Psoas muscle (tissue), 8 donors: ENCODE measurements at regions of chr5 and their contacts with region 1.

Region 1: GRCh38 chr5:157718519-157718918 is 12.7 kb upstream of the THG1L start:
- DNase-seq: no peak
- ATAC-seq: peak; percentile 76 to 95 (median 81)
- H3K4me3 ChIP-seq: no peak overlapping the region
- H3K27ac ChIP-seq: no peak overlapping the region
- H3K4me1 ChIP-seq: peaks cover 3% of the 10 kb centered on the region
- H3K27me3 ChIP-seq: no peaks in the 10 kb centered on the region
- CTCF ChIP-seq: peak; percentile 66

Region 2: DNA sequence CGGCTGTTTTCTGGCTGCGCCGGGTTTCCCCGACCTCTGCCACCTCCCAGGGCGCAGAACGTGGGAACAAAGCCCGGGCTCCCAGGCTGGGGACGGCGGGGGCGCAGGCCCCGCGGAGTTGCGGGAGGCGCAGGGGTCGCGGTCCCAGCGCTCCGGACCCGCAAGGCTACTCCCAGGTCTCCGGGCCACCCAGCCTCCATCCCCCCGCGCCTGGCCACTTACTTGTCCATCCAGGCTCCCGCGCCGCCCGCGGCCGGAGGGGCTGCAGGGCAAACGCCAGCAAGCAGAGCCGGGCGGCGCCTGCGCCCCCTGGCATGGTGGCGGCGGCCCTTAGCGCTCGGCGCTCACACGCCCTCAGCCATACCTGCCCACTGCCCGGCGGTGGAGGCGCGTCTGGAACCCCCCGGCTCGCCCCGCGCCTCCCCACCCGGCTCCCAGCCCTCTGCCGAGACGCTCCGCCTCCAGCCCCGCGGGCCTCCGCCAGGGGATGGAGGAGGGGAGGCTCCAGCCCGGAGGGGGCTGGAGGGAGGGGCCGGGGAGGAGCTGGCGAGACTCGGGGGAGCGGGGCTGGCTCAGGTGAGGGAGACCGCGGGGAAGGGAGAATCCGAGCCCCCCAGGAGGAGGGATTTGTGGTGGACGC is 143.0 kb before region 1 on chr5 and contains the start of gene ADAM19:
- intact Hi-C with region 1: loop called in 1 of 2 experiments (anchors 10 kb)
- DNase-seq: peak; percentile 56 to 75
- ATAC-seq: peak; percentile 67 to 79 (median 76)
- H3K4me3 ChIP-seq: peak within 1 kb of the TSS; percentile 87
- H3K27ac ChIP-seq: peak within 1 kb of the TSS; percentile 70
- H3K4me1 ChIP-seq: peaks cover 29% of the 10 kb centered on the region
- H3K27me3 ChIP-seq: no peaks in the 10 kb centered on the region
- CTCF ChIP-seq: peak; percentile 15
- total RNA-seq, gene ADAM19: 1.4 to 4.5 (median 3.1) TPM

Region 3: GRCh38 chr5:158619083-158619788 is 900.7 kb after region 1 on chr5:
- intact Hi-C with region 1: no loop called
- DNase-seq: no peak
- ATAC-seq: peak in 1 of 4 donors; percentile 27
- H3K4me3 ChIP-seq: no peak overlapping the region
- H3K27ac ChIP-seq: no peak overlapping the region
- H3K4me1 ChIP-seq: no peaks in the 10 kb centered on the region
- H3K27me3 ChIP-seq: no peaks in the 10 kb centered on the region
- CTCF ChIP-seq: no peak